Sigmoid colon (tissue), 7 donors: ENCODE measurements at regions of chr17 and their contacts with region 1.

Region 1: DNA sequence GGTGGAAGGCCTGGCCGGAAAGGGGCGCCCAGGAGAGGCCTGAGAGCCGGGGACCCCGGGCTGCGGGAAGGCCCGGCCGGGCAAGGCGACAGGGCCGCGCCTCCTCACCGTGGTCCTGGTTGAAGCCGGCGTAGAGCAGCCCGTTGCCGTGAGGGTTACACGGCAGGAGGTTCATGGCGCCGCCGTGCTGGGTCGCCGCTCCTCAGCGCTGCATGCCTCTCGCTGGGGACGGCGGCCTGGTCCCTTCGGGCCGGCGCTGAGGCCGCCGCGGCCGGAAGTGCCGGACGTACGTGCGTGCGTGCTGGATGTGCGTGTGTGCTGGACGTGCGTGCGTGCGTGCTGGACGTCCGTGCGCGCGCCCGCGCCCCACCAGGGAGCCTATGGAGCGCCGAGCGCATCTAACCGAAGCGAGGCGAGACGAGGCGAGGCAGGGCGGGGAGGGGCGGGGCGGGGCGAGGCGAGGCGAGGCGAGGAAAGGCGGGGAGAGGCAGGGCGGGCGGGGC is at the start of gene WDR45B:
- DNase-seq: peak; percentile 99
- H3K4me3 ChIP-seq: peak within 1 kb of the TSS; percentile 73 to 100 (median 98)
- H3K27ac ChIP-seq: peak within 1 kb of the TSS; percentile 91 to 100 (median 98)
- H3K4me1 ChIP-seq: peaks cover 0 to 37% (median 29%) of the 10 kb centered on the region in 4 donors
- H3K27me3 ChIP-seq: no peaks in the 10 kb centered on the region
- CTCF ChIP-seq: no peak
- EP300 ChIP-seq: peak; percentile 11 to 82 (median 46)
- POLR2A ChIP-seq: peak; percentile 93 to 94
- total RNA-seq, gene WDR45B: 51.7 to 67.0 (median 66.7) TPM

Region 2: GRCh38 chr17:82457997-82458864 is 190.0 kb before region 1 on chr17 and contains the start of gene NARF:
- intact Hi-C with region 1: loop called (anchors 5 kb)
- DNase-seq: peak; percentile 100
- H3K4me3 ChIP-seq: peak within 1 kb of the TSS; percentile 77 to 97 (median 80)
- H3K27ac ChIP-seq: peak within 1 kb of the TSS; percentile 99 to 100 (median 100)
- H3K4me1 ChIP-seq: peaks cover 0 to 23% (median 19%) of the 10 kb centered on the region in 4 donors
- H3K27me3 ChIP-seq: no peaks in the 10 kb centered on the region
- CTCF ChIP-seq: no peak
- EP300 ChIP-seq: peak in 1 of 4 donors; percentile 55
- POLR2A ChIP-seq: peak; percentile 95 to 98
- total RNA-seq, gene NARF: 34.6 to 50.4 (median 43.8) TPM

Region 3: DNA sequence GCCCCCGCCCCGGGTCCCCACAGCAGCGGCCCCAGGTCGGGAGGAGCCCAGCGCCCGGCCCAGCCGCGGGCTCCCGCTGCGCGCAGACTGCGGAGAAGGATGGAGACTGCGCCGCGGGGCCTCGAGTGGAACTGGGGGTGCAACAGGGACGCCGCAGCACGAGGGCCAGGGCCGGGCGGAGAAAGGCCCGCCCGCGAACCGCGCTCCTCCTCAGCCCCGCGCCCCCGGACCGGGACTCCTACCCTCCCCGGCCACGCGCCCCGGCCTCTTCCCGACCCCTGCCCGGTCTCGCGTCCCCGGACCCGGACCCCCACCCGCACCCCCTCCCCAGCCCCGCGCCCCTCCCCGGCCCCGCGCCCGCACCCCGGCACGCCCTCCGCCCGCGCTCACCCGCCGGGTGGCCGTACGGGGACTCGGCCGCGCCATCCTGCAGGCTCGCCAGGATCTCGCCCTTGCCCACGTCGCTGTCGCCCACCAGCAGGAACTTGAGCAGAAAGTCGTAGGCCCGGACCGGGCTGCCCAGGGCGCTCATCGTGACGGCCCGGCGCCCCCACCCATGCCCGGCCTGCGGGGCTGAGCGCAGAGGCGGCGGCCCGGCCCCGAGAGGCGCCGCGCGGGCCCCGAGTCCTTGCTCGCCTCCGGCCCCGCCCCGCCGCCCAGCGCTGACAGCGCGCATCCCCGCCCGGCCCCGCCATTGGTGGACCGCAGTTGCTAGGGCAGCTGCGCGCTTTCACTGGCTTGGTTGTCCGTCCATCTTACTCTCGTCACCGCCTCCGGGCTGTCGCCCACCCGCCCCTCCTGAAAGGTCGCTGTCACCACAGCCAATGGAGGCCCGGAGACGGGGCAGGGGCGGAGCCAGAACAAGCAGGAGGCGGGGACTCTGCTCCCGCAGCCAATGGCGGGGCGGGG is 50.1 kb after region 1 on chr17 and contains the start of gene RAB40B:
- intact Hi-C with region 1: loop called (anchors 2 kb)
- DNase-seq: peak; percentile 100
- H3K4me3 ChIP-seq: peak within 1 kb of the TSS; percentile 66 to 89 (median 76)
- H3K27ac ChIP-seq: peak within 1 kb of the TSS; percentile 71 to 75 (median 74)
- H3K4me1 ChIP-seq: peaks cover 0 to 23% (median 17%) of the 10 kb centered on the region in 4 donors
- H3K27me3 ChIP-seq: no peaks in the 10 kb centered on the region
- CTCF ChIP-seq: no peak
- EP300 ChIP-seq: no peak
- POLR2A ChIP-seq: no peak
- total RNA-seq, gene RAB40B: 11.7 to 32.7 (median 21.6) TPM

Region 4: GRCh38 chr17:82716203-82717010 is 68.2 kb after region 1 on chr17 and contains the start of gene FN3KRP:
- intact Hi-C with region 1: loop called (anchors 5 kb)
- DNase-seq: peak; percentile 98
- H3K4me3 ChIP-seq: peak within 1 kb of the TSS; percentile 58 to 85 (median 76)
- H3K27ac ChIP-seq: peak within 1 kb of the TSS; percentile 76 to 79 (median 78)
- H3K4me1 ChIP-seq: peaks cover 0 to 24% (median 20%) of the 10 kb centered on the region in 4 donors
- H3K27me3 ChIP-seq: no peaks in the 10 kb centered on the region
- CTCF ChIP-seq: no peak
- EP300 ChIP-seq: no peak
- POLR2A ChIP-seq: peak in 1 of 2 donors; percentile 59
- total RNA-seq, gene FN3KRP: 8.1 to 18.0 (median 13.1) TPM

Region 5: GRCh38 chr17:82775001-82775823 is 127.0 kb after region 1 on chr17:
- intact Hi-C with region 1: no loop called
- DNase-seq: peak; percentile 81
- H3K4me3 ChIP-seq: peak overlapping the region in 1 of 4 donors; percentile 9
- H3K27ac ChIP-seq: no peak overlapping the region
- H3K4me1 ChIP-seq: peaks cover 0 to 7% (median 2%) of the 10 kb centered on the region in 4 donors
- H3K27me3 ChIP-seq: no peaks in the 10 kb centered on the region
- CTCF ChIP-seq: peak; percentile 61 to 90 (median 80)
- EP300 ChIP-seq: no peak
- POLR2A ChIP-seq: no peak